AG04449 (cell line): ENCODE measurements at regions of chr14 and their contacts with region 1.

Region 1: DNA sequence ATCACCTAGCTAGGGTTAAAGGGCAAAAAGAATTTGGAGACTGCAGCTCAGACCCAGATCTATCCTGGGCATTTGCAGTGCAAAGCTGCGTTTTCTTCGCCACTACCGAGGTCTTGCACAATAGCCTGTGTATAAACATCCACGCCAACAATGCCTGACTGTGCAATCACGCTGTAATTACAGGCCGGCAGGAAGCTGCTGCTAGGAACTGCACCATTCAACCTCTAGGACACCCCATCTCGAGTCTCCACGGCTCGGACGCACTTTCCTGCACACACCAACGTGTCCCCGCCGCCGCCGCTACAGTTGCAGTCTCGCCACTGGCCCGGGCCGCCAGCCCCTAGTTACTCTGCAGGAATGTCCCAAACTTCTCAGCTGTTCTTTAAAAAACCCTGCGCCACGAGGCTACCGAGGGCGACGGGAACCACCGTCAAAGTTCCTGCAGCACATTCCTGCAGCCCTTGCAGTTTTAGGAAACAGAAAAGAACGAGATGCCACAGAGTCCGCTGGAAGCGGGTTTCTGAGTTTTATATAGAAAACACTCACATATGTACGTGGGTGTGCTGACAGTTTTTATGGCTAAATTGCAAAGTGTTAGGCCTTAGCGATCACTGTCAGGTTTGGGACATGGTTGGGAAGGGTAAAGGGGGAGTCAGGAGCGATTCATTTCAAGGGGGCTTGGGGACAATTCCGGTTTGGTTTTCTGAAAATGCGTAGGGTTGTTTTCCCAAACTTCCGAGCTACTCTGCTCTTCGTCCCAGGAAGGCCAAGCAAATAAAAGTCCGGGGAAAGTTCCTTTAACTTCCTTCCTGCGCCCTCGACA is 65.5 kb upstream of the PTGR2 start:
- DNase-seq: peak; percentile 76
- H3K4me3 ChIP-seq: peak overlapping the region; percentile 72
- CTCF ChIP-seq: peak; percentile 10

Region 2: GRCh38 chr14:73759714-73760597 is 26.1 kb before region 1 on chr14:
- CTCF ChIA-PET with region 1: interaction called, 6 read pairs
- POLR2A ChIA-PET with region 1: interaction called, 38 read pairs
- DNase-seq: peak; percentile 92
- H3K4me3 ChIP-seq: peak overlapping the region; percentile 89
- CTCF ChIP-seq: no peak